Aorta (tissue), 5 donors: ENCODE measurements at regions of chr13 and their contacts with region 1.

Region 1: DNA sequence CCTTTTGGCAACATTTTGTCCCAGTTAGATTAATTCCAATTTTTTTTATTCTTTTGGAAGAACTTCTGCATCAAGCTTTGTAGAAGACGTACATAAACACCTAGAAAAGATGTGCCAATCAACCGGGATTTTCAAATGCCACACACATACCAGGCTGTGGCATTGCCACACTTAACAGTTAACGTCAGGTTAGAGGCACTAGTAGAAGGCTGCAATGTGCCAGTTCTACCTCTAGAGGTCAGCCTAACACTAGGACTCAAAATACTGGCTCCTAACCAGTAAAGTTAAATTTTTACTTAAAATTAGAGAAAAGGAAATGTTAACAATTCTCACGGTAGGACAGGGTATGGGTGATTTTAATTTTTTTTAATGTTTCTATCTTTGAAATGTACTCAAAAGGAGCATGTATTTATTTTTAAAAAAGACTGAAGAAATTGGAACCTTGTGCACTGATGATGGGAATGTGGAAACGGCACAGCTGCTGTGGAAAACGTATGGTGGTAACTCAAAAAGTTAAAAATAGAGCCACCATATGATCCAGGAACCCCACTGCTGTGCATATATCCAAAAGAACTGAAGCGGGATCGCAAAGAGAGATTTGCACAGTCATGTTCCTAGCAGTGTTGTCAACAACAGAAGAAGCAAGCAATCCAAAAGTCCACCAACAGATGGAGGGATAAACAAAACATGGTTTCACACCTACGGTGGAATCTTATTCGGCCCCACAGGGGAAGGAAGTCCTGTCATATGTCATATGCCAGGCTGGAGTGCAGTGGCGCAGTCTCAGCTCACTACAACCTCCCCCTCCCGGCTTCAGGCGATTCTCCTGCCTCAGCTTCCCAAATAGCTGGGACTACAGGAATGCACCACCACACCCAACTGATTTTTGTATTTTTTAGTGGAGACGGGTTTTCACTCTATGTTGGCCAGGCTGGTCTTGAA is 30.3 kb downstream of the CRYL1 start:
- DNase-seq: peak in 1 of 2 donors; percentile 53
- ATAC-seq: peak; percentile 89
- H3K4me3 ChIP-seq: no peak overlapping the region
- H3K27ac ChIP-seq: no peak overlapping the region
- H3K4me1 ChIP-seq: no peaks in the 10 kb centered on the region
- H3K27me3 ChIP-seq: no peaks in the 10 kb centered on the region

Region 2: DNA sequence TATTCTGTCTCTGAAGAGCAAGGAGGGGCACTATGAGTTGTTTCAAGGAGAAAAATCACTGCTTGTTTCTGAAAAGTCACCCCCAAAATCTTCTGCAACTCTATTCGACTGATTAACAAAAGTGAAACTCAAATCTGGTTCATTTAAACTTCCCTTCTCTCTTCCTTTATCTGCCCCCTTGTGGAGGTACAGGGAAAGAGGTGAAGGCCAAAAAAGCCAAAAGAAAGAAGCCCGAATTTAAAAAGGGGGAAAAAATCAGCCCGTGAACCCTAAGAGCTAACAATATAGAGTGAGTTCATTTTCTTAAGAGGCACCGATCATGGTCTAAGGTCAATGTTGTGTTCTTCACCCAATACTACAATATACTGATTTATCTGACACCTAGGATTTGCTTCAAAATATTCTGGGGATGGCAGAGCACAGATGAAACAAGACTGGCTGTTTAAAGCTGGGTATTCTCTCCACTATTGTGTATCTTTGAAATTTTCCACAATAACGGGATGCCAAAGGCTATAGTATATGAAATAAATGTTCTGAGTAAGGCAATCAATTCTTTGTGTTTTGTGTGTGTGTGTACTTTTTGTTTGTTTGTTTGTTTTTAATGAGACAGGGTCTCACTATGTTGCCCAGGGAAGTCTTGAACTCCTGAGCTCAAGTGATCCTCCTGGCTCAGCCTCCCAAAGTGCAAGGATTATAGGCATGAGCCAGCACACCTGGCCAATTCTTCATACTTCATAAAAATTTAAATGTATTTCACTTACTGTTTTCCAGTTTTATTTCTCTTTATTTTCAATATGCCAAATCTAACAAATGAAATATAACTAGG is 333.4 kb after region 1 on chr13:
- intact Hi-C with region 1: loop called (anchors 2 to 5 kb)
- DNase-seq: no peak
- ATAC-seq: peak; percentile 63
- H3K4me3 ChIP-seq: no peak overlapping the region
- H3K27ac ChIP-seq: no peak overlapping the region
- H3K4me1 ChIP-seq: peaks cover 2 to 3% of the 10 kb centered on the region in 2 donors
- H3K27me3 ChIP-seq: no peaks in the 10 kb centered on the region

Region 3: DNA sequence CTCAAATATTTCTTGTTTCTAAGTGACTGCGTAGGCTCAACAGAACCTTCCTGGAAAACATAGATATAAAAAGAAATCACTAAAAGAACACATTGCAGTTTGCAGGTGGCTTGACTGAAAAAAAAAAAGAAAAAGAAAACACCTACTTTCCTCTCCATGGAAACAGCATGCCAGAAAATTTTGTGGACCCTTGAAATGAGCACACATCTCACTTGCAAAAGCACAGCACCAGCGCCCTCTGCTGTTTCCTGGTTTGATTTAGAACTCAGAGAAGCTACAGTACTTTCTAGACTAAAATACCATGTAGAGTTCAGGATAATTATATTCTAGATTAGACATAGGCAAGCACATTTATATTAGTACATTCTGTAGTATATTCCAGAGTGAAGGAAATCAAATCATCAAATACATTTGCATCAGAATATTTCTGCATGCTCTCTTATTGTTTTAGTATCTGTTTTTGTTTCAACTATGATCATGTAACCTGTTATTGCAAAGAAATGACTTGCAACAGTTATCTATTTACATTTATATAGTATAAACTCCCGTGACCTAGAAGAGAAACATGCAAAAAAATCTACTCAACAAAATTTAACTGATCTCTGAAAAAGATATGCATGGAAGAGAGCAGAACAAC is 429.5 kb after region 1 on chr13:
- intact Hi-C with region 1: loop called (anchors 2 to 5 kb)
- DNase-seq: peak; percentile 83 to 86
- ATAC-seq: no peak
- H3K4me3 ChIP-seq: no peak overlapping the region
- H3K27ac ChIP-seq: no peak overlapping the region
- H3K4me1 ChIP-seq: no peaks in the 10 kb centered on the region
- H3K27me3 ChIP-seq: no peaks in the 10 kb centered on the region